CD8-positive, alpha-beta memory T cell (primary cell): ENCODE measurements at regions of chr19 and their contacts with region 1.

Region 1: GRCh38 chr19:49869441-49870176 is 2.2 kb upstream of the PNKP start:
- DNase-seq: peak; percentile 89 to 93 (median 92)
- H3K4me3 ChIP-seq: peak overlapping the region; percentile 73
- H3K4me3 Mint-ChIP-seq: peak overlapping the region in 2 of 7 donors; percentile 84 to 86
- H3K27ac ChIP-seq: peak overlapping the region; percentile 71
- H3K27ac Mint-ChIP-seq: peak overlapping the region in 6 of 8 donors; percentile 66 to 97 (median 90)
- H3K4me1 ChIP-seq: peaks cover 47% of the 10 kb centered on the region
- H3K4me1 Mint-ChIP-seq: peaks cover 18 to 31% (median 30%) of the 10 kb centered on the region in 3 donors
- H3K27me3 ChIP-seq: no peaks in the 10 kb centered on the region
- H3K27me3 Mint-ChIP-seq: peaks cover 0 to 4% of the 10 kb centered on the region in 2 donors

Region 2: DNA sequence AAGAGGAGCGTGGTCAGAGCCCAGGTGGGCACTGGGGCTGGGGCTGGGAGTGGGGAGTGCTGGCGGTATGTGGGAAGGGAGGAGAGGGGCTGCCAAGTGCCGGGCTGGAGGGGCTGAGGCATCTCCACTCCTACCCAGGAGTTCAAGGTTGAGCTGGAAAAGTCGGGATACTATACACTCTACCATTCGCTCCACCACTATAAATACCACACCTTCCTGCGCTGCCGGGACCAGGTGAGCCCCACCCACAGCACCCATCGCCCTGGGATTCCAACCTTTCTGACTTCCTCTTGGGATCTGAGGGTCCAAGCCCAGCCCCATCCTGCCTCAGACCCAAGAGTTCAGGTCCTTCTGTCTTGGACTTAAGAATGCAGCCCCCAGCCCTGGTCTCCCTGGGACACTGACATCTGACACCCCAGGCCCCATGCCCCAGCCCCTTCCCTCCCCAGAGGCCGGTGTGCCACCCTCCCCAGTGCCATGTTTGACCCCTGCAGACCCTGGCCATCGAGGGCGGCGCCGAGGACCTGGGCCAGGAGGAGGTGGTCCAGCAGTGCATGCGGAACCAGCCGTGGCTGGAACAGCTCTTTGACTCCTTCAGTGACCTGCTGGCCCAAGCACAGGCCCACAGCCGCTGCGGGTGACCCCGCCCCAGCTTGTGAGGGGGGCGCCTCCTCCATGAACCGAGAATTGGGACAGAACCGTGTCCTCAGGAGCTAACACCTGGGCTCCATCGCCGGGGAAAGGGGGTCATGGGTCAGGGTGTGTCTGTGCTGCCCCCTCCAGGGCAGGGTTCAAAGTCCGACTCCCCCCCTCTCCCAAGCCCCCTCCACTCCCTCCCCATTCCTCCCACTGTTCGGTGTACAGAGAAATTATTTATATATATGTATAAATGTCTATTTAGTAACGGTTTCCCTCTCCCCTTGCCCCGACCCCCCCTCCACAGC is 244.4 kb before region 1 on chr19:
- CTCF ChIA-PET with region 1: no interaction called
- POLR2A ChIA-PET with region 1: interaction called, 10 read pairs
- DNase-seq: no peak
- H3K4me3 ChIP-seq: no peak overlapping the region
- H3K4me3 Mint-ChIP-seq: no peak overlapping the region
- H3K27ac ChIP-seq: no peak overlapping the region
- H3K27ac Mint-ChIP-seq: peak overlapping the region in 2 of 8 donors; percentile 26 to 68
- H3K4me1 ChIP-seq: no peaks in the 10 kb centered on the region
- H3K4me1 Mint-ChIP-seq: no peaks in the 10 kb centered on the region
- H3K27me3 ChIP-seq: no peaks in the 10 kb centered on the region
- H3K27me3 Mint-ChIP-seq: no peaks in the 10 kb centered on the region

Region 3: DNA sequence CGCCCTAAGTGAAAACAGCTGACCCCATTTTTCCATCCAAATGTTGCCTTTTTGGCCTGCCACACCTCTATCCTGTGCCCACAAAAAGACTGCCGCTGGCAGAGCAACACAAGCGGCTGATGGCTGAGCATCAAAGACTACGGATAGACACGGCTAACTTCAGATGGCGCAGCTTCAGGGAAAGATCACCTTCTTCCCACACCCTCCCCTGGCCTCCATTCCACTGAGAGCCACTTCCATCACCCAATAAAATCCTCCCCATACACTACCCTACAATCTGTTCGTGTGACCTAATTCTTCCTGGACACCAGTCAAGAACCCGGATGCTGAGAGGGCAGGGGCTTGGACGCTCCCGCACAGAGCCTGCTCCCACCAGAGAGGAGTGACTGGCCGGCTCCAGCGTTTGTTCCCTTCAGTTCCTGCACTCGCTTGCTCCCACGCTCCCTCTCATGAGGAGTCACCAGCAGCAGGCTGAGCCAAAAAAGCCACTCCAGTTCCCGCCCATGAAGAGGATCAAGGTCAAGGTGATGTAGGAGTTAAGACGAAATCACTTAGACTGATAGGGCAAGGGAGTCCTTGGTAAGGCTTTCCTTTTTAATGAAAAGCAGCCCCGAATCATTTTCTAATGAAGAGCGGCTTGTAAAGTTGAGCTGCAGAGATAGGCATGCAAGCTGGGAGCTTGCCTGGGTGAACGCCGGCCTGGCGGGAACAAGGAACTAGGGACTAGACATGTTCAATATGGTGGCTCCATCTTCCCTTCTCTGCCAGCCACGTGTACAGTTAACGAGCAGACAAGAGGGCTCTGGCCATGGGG is 142.2 kb before region 1 on chr19:
- CTCF ChIA-PET with region 1: no interaction called
- POLR2A ChIA-PET with region 1: interaction called, 11 read pairs
- DNase-seq: no peak
- H3K4me3 ChIP-seq: no peak overlapping the region
- H3K4me3 Mint-ChIP-seq: no peak overlapping the region
- H3K27ac ChIP-seq: no peak overlapping the region
- H3K27ac Mint-ChIP-seq: no peak overlapping the region
- H3K4me1 ChIP-seq: no peaks in the 10 kb centered on the region
- H3K4me1 Mint-ChIP-seq: no peaks in the 10 kb centered on the region
- H3K27me3 ChIP-seq: no peaks in the 10 kb centered on the region
- H3K27me3 Mint-ChIP-seq: peaks cover 0 to 3% of the 10 kb centered on the region in 2 donors

Region 4: GRCh38 chr19:49850473-49851342 is 18.9 kb before region 1 on chr19 and contains the start of gene PTOV1:
- CTCF ChIA-PET with region 1: interaction called, 5 read pairs
- POLR2A ChIA-PET with region 1: interaction called, 20 read pairs
- DNase-seq: peak; percentile 84 to 90 (median 85)
- H3K4me3 ChIP-seq: peak within 1 kb of the TSS; percentile 79
- H3K4me3 Mint-ChIP-seq: peak within 1 kb of the TSS; percentile 90 to 99 (median 95)
- H3K27ac ChIP-seq: peak within 1 kb of the TSS; percentile 95
- H3K27ac Mint-ChIP-seq: peak within 1 kb of the TSS; percentile 95 to 99 (median 98)
- H3K4me1 ChIP-seq: peaks cover 30% of the 10 kb centered on the region
- H3K4me1 Mint-ChIP-seq: peaks cover 38 to 53% (median 40%) of the 10 kb centered on the region in 3 donors
- H3K27me3 ChIP-seq: no peaks in the 10 kb centered on the region
- H3K27me3 Mint-ChIP-seq: peaks cover 0 to 4% of the 10 kb centered on the region in 2 donors
- total RNA-seq, gene PTOV1: 91.9 to 93.7 TPM